Activated naive CD4-positive, alpha-beta T cell treated with anti-CD3 and anti-CD28 coated beads for 36 hours (primary cell): ENCODE measurements at regions of chr7 and their contacts with region 1.

Region 1: GRCh38 chr7:22110227-22110839 is 164.6 kb upstream of the CDCA7L start:
- DNase-seq: peak; percentile 82
- H3K4me3 Mint-ChIP-seq: no peak overlapping the region
- H3K27ac Mint-ChIP-seq: no peak overlapping the region
- H3K4me1 Mint-ChIP-seq: no peaks in the 10 kb centered on the region
- H3K27me3 Mint-ChIP-seq: peaks cover 2% of the 10 kb centered on the region

Region 2: GRCh38 chr7:21587139-21587784 is 523.1 kb before region 1 on chr7:
- CTCF ChIA-PET with region 1: no interaction called
- intact Hi-C with region 1: no loop called
- DNase-seq: no peak
- H3K4me3 Mint-ChIP-seq: no peak overlapping the region
- H3K27ac Mint-ChIP-seq: no peak overlapping the region
- H3K4me1 Mint-ChIP-seq: peaks cover 11% of the 10 kb centered on the region
- H3K27me3 Mint-ChIP-seq: peaks cover 2% of the 10 kb centered on the region

Region 3: DNA sequence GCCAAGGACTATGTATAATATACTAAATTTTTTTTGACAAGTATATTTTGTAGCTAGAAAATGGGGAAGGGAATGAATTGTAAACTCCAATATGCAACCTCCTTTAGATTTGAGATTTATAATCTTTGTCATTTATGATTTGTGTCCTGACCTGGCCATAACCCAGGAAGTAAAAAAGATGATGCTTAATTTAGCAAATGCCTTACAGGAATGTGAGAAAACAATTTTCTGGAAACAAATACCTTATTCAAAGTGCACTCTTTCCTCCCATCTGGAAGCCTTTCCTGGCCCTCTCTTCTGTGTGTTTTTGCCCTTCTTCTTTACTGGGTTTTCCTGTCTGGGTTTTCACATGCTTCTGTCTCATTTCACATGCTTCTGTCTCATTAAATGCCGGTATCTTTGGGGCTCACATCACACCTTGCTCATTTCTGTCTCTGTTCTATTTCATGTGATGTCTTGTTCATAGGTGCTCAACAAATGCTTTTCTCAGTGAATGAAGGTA is 97.4 kb after region 1 on chr7:
- CTCF ChIA-PET with region 1: interaction called, 13 read pairs
- intact Hi-C with region 1: no loop called
- DNase-seq: no peak
- H3K4me3 Mint-ChIP-seq: no peak overlapping the region
- H3K27ac Mint-ChIP-seq: no peak overlapping the region
- H3K4me1 Mint-ChIP-seq: peaks cover 2% of the 10 kb centered on the region
- H3K27me3 Mint-ChIP-seq: peaks cover 2% of the 10 kb centered on the region

Region 4: DNA sequence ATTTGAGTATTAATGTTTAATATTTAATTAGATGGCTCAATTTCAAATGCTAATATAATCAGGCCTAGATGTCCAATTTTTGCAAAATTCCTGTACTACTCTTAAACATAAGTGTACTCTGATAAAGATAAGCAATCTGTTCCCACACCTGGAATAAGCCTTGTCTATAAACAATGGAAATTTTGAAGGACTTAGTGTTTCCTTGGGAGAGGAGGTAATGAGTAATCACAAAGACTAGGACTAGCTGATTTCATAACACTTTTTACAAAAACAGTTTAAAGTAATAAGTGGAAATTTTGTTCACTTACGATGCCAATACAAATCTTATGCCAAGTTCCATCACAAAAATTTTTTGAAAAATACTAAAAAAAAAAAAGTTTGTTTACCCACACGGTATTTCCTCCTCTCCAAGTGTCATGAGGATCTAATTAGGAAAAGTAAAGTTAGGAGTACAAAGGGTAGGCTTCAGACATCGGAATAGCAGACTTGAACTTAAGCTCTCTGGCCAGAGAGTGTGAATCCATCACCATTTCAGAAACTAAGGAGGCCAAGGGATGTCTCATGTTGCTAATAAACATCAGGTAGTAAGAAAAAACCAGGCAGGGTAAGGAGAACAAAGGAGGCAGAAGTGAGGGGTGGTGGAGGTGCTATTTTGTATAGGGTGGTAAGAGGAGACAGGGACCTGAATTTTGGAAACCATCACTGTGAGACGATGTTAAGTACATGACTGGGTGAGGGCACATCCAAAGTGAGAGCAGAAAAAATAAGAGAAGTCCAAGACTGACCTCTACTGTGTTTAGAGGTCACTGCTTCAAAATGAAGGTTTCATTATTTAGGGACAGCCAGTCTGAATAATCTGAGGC is 185.3 kb after region 1 on chr7:
- CTCF ChIA-PET with region 1: interaction called, 6 read pairs
- intact Hi-C with region 1: loop called (anchors 5 kb)
- DNase-seq: no peak
- H3K4me3 Mint-ChIP-seq: no peak overlapping the region
- H3K27ac Mint-ChIP-seq: no peak overlapping the region
- H3K4me1 Mint-ChIP-seq: no peaks in the 10 kb centered on the region
- H3K27me3 Mint-ChIP-seq: peaks cover 1% of the 10 kb centered on the region

Region 5: GRCh38 chr7:22481726-22482125 is 371.4 kb after region 1 on chr7:
- CTCF ChIA-PET with region 1: interaction called, 18 read pairs
- intact Hi-C with region 1: no loop called
- DNase-seq: peak; percentile 31
- H3K4me3 Mint-ChIP-seq: no peak overlapping the region
- H3K27ac Mint-ChIP-seq: no peak overlapping the region
- H3K4me1 Mint-ChIP-seq: peaks cover 7% of the 10 kb centered on the region
- H3K27me3 Mint-ChIP-seq: no peaks in the 10 kb centered on the region

Region 6: DNA sequence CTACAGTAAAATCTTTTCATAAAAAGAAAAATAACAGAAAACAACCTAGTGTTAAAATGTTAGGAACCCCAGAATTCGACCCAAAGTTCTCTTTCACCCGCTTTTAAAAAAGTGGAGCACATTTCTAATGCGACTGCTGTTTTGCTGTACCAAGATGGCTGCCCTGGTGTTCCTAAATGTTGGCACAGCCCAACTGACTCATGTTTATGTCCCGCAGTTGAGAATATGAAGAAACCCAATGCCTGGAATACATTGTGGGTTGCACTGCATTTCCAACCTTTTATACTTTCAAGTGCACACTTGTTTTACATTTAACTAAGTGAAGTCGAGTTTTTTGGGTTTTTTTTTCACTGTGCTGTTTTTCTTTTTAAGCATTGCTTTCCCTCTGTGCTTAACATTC is 388.7 kb after region 1 on chr7:
- CTCF ChIA-PET with region 1: interaction called, 6 read pairs
- intact Hi-C with region 1: loop called (anchors 1 kb)
- DNase-seq: no peak
- H3K4me3 Mint-ChIP-seq: no peak overlapping the region
- H3K27ac Mint-ChIP-seq: no peak overlapping the region
- H3K4me1 Mint-ChIP-seq: peaks cover 3% of the 10 kb centered on the region
- H3K27me3 Mint-ChIP-seq: peaks cover 16% of the 10 kb centered on the region